ENCODE measurements at regions of chr1 and their contacts with region 1.

Region 1: GRCh38 chr1:201114236-201115131 is 2.3 kb upstream of the CACNA1S start:
- DNase-seq: peak; percentile 100
- ATAC-seq: peak; percentile 94
- H3K4me3 ChIP-seq: peak overlapping the region; percentile 73
- H3K27ac ChIP-seq: no peak overlapping the region
- H3K4me1 ChIP-seq: peaks cover 13% of the 10 kb centered on the region
- H3K27me3 ChIP-seq: no peaks in the 10 kb centered on the region
- CTCF ChIP-seq: peak; percentile 100

Region 2: DNA sequence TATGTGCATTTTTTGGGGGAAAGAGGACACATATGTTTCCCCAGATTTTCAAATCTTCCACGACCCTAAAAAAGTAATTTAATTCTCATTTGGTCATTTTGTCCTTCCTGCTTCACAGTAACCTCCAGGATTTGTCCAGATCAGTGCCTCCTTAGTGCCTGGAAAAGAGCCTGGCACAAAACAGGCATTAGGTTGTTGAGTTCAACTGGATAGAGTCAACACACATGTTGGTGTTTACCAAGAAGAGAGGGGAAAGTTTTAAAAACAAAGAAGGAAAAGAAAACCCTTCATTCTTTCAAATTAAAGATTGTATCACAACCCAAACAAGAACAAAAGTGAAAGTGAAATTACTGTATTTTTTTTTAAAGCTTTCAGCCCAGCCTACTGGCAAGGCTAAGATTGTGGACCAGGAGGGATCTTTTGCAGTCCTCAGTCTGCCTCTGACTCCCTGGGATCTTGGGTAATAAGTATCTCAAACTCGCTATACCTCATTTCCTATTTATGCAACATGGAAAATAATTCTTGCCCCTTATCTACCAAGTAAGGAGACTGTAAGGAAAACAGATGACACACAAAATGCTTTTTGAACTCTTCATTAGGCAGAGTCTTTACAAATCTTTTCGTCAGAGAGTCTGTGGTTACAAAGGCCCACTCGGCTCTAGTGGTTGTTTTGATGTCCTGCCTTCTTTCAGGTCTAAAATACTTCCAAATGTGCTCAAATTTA is 762.5 kb before region 1 on chr1:
- CTCF ChIA-PET with region 1: no interaction called
- POLR2A ChIA-PET with region 1: no interaction called
- intact Hi-C with region 1: no loop called
- DNase-seq: no peak
- ATAC-seq: peak; percentile 35
- H3K4me3 ChIP-seq: peak overlapping the region; percentile 0; the same call in 1 of the 2 replicates
- H3K27ac ChIP-seq: no peak overlapping the region
- H3K4me1 ChIP-seq: 0 out of 2 replicates have a peak, but pooled peaks cover 4% of the 10 kb centered on the region
- H3K27me3 ChIP-seq: no peaks in the 10 kb centered on the region
- CTCF ChIP-seq: no peak

Region 3: GRCh38 chr1:200699871-200700270 is 414.6 kb before region 1 on chr1:
- CTCF ChIA-PET with region 1: no interaction called
- POLR2A ChIA-PET with region 1: no interaction called
- intact Hi-C with region 1: no loop called
- DNase-seq: no peak
- ATAC-seq: no peak
- H3K4me3 ChIP-seq: no peak overlapping the region
- H3K27ac ChIP-seq: no peak overlapping the region
- H3K4me1 ChIP-seq: no peaks in the 10 kb centered on the region
- H3K27me3 ChIP-seq: no peaks in the 10 kb centered on the region
- CTCF ChIP-seq: no peak

Region 4: DNA sequence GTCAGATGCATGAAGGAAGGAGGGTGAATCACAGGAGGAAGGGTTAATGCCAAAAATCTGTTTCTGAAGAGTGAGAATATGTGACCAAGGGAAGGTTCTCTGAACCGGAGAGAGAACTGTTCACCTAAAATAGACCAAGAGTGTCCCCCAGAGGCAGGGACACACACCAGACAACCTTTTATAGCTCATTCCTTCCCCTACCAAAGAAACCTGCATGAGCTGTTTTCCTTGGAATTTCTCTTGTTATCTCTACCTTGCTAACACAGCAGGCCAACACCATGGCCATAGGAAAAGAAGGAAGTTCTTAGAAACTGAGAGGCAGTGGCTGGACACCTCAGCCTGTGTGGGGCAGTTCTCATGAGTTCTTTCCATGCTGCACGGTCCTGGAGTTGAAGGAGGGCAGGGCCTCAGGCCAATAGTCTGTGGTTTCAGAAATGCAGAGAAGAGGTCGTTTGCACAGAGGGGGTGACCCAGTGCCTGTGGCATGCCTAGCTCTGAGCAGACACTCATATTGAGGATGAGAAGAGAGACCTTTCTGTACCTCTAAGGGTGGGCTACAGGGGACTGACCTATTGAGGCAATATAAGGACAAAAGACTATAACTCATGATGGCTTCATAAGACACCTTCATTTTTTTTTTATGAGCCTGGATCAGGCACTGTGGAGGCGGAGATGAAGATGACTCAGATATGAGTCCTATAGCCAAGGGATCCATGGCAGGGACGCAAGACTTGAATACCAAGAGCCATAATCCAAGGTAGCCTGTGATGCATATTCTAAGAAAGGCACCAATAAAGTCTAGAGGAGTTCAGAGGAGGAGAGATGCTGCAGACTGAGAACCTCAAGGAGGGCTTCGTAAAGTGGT is 115.5 kb after region 1 on chr1:
- CTCF ChIA-PET with region 1: interaction called, 10 read pairs
- POLR2A ChIA-PET with region 1: no interaction called
- intact Hi-C with region 1: no loop called
- DNase-seq: peak; percentile 99
- ATAC-seq: peak; percentile 92
- H3K4me3 ChIP-seq: peak overlapping the region; percentile 3; the same call in 1 of the 2 replicates
- H3K27ac ChIP-seq: peak overlapping the region; percentile 54
- H3K4me1 ChIP-seq: peaks cover 21% of the 10 kb centered on the region
- H3K27me3 ChIP-seq: no peaks in the 10 kb centered on the region
- CTCF ChIP-seq: peak; percentile 91

Region 5: GRCh38 chr1:201375169-201375568 is 260.7 kb after region 1 on chr1:
- CTCF ChIA-PET with region 1: no interaction called
- POLR2A ChIA-PET with region 1: no interaction called
- intact Hi-C with region 1: no loop called
- DNase-seq: peak; percentile 67
- ATAC-seq: peak; percentile 40
- H3K4me3 ChIP-seq: no peak overlapping the region
- H3K27ac ChIP-seq: no peak overlapping the region
- H3K4me1 ChIP-seq: peaks cover 6% of the 10 kb centered on the region
- H3K27me3 ChIP-seq: peaks cover 58% of the 10 kb centered on the region
- CTCF ChIP-seq: peak; percentile 77